PC-3 (cell line): ENCODE measurements at regions of chr18 and their contacts with region 1.

Region 1: DNA sequence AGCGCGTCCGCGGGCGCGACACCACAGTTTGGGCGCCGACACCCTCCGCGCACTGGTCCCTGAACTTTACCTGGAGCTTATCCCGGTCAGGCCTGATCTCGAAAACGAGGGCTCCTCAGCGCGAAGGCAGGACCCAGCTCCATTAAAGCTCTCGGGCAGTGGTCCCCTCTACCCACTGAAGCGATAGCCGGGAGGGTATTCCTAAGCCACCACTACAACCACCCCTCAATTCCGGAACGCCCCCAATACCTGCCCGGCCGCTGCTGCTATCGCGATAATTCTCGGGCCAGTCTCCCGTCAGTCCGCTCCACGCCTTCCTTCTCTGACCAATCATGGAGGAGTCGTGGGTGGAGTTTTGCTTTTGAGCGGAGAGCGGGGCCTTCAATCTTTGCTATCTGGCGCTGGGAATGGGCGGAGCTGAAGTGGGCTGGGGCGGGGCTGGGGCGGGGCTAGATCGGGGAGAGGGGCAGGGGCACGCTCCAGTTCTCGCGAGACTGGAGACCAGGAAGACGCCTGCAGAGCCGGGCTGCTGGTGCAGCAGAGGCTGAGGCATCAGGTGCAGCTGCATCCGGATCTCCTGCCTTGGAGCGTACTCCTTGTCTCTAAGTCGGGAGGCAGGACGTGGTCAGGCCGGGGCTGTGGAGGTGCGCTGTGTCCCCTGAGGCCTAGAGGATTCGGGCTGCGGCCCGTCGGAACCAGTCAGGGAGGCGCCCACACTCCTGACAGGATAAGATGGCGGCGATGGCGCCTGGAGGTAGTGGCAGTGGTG is at the starts of genes PIGN and RELCH:
- DNase-seq: peak; percentile 98
- ATAC-seq: peak; percentile 84
- H3K4me3 ChIP-seq: peak within 1 kb of the TSS; percentile 99
- H3K27ac ChIP-seq: peak within 1 kb of the TSS; percentile 47
- H3K4me1 ChIP-seq: peaks cover 34% of the 10 kb centered on the region
- H3K27me3 ChIP-seq: no peaks in the 10 kb centered on the region
- CTCF ChIP-seq: no peak
- total RNA-seq, gene PIGN: 20.3 and 22.7 TPM in 2 replicates
- total RNA-seq, gene RELCH: 17.3 and 21.6 TPM in 2 replicates

Region 2: DNA sequence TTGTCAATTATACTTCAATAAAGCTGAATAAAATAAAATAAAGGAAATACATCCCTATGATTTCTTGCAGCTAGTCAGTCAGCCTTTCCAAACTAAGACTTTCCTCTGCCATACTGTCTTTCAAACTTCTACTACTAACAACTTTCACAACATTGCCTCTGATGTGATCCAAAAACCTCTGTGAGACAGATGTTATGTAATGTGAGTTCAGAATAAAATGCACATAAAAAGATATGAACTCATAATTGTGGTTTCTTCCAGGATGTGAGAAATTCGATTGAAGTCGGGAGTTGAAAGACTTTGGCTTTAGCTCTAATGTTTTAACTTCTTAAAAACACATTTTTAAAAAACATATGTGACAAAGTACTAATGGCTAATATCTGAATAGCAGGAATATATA is 98.8 kb before region 1 on chr18:
- CTCF ChIA-PET with region 1: no interaction called
- POLR2A ChIA-PET with region 1: interaction called, 31 read pairs
- intact Hi-C with region 1: no loop called
- DNase-seq: no peak
- ATAC-seq: no peak
- H3K4me3 ChIP-seq: no peak overlapping the region
- H3K27ac ChIP-seq: no peak overlapping the region
- H3K4me1 ChIP-seq: no peaks in the 10 kb centered on the region
- H3K27me3 ChIP-seq: no peaks in the 10 kb centered on the region
- CTCF ChIP-seq: no peak

Region 3: GRCh38 chr18:62249478-62250097 is 62.6 kb after region 1 on chr18:
- CTCF ChIA-PET with region 1: interaction called, 3 read pairs
- POLR2A ChIA-PET with region 1: no interaction called
- intact Hi-C with region 1: loop called (anchors 1 kb)
- DNase-seq: peak; percentile 84
- ATAC-seq: peak; percentile 70
- H3K4me3 ChIP-seq: no peak overlapping the region
- H3K27ac ChIP-seq: no peak overlapping the region
- H3K4me1 ChIP-seq: no peaks in the 10 kb centered on the region
- H3K27me3 ChIP-seq: no peaks in the 10 kb centered on the region
- CTCF ChIP-seq: peak; percentile 60

Region 4: DNA sequence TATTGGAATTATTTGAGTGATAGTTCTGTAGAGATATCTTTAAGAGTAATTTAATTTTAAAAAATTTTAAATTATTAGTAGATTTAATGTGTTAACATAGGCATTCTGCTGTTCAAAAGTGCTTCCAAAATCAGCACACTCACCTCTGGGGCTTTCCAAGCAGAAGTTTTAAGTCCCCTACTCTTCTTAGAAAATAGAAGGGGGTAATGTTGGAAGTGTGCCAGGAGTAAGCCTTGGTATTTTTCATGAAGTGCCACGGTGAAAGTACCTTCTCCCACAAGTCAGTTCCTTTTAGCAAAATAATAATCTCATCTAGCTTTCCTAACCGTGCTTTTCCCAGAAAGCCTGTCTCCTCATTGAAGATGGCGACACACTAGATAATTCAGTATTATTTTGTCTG is 134.2 kb after region 1 on chr18:
- CTCF ChIA-PET with region 1: no interaction called
- POLR2A ChIA-PET with region 1: no interaction called
- intact Hi-C with region 1: no loop called
- DNase-seq: no peak
- ATAC-seq: no peak
- H3K4me3 ChIP-seq: no peak overlapping the region
- H3K27ac ChIP-seq: no peak overlapping the region
- H3K4me1 ChIP-seq: no peaks in the 10 kb centered on the region
- H3K27me3 ChIP-seq: no peaks in the 10 kb centered on the region
- CTCF ChIP-seq: no peak

Region 5: GRCh38 chr18:62384610-62385099 is 197.7 kb after region 1 on chr18:
- CTCF ChIA-PET with region 1: no interaction called
- POLR2A ChIA-PET with region 1: no interaction called
- intact Hi-C with region 1: loop called (anchors 10 kb)
- DNase-seq: peak; percentile 94
- ATAC-seq: peak; percentile 59
- H3K4me3 ChIP-seq: no peak overlapping the region
- H3K27ac ChIP-seq: peak overlapping the region; percentile 98
- H3K4me1 ChIP-seq: peaks cover 63% of the 10 kb centered on the region
- H3K27me3 ChIP-seq: no peaks in the 10 kb centered on the region
- CTCF ChIP-seq: no peak

Region 6: DNA sequence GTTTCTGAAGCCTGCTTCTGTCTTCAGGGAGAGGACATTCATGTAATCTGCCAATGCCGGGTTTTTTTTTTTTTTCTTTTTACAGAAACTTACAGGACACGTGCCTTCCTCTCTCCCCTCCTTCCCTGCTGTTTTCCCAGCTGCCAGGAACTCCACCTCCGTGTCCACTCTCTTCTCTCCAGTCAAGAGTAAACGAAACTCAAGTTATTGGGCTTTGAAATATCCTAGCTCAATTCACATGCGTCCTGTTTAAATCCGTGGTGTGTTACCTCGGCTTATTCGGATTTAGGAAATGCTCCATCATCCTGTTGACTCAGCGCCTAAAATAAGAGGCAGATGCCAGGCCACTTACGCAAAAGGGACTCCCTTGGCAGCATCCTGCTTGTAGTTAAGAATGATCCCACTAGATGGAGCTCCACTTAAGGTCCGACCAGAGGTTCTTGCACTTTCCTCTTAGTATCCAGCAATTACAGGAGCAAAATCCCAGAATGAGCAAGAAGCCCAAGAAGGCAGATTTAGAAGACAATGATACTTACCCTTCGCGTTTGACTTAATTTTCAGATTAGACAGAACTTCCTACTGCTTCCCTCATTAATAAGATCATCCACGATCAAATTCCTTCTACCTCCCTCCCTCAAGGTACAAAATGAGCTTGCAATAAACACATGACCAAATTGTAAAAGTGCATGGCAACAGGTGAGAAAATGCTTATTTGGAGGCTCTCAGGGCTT is 238.7 kb after region 1 on chr18:
- CTCF ChIA-PET with region 1: no interaction called
- POLR2A ChIA-PET with region 1: interaction called, 5 read pairs
- intact Hi-C with region 1: loop called (anchors 1 kb)
- DNase-seq: peak; percentile 99
- ATAC-seq: peak; percentile 83
- H3K4me3 ChIP-seq: peak overlapping the region; percentile 60
- H3K27ac ChIP-seq: peak overlapping the region; percentile 91
- H3K4me1 ChIP-seq: peaks cover 24% of the 10 kb centered on the region
- H3K27me3 ChIP-seq: no peaks in the 10 kb centered on the region
- CTCF ChIP-seq: peak; percentile 82

Region 7: DNA sequence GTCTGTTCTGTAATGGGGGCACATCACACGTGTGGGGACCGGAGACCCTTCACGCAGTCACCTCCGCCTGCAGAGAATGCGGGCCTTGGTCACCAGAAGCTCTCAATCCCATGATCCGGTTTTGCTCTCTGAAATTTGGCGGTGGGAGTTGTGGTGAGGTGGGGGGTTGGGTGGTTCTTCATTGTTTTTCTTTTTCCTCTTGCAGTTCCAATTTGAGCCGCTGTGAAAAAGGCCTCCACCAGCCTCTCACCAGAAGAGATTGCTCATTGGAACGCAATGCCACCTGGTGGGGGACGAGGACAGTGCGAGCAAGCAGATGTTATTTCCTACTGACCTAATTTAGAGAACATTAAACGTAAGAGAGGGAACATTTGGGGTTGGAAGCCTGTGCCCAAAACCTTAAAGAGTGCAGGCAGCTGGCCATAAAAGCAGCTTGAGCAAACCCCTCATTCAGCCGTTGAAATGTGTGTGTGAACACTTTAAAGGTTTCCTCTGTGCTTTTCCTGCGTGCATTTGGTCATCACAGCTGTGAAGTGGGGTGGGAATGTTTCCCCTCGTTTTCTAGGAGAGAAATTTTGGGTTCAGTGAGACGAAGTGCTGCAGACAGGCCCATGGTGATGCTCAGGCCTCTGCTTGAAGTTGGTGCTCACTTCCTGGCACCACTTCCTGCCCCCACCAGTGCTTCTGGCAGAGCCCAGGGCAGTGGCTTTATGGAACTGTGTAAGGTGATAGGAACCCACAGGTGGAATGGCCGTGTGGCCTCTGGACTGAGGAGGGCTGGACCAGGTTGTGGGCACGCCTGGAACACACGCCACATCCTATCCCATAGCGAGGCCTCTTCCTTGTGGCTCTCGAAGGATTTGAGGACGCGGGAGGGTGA is 397.5 kb after region 1 on chr18:
- CTCF ChIA-PET with region 1: no interaction called
- POLR2A ChIA-PET with region 1: no interaction called
- intact Hi-C with region 1: loop called (anchors 1 kb)
- DNase-seq: peak; percentile 90
- ATAC-seq: peak; percentile 83
- H3K4me3 ChIP-seq: no peak overlapping the region
- H3K27ac ChIP-seq: no peak overlapping the region
- H3K4me1 ChIP-seq: peaks cover 4% of the 10 kb centered on the region
- H3K27me3 ChIP-seq: no peaks in the 10 kb centered on the region
- CTCF ChIP-seq: peak; percentile 97